CD4-positive, alpha-beta memory T cell (primary cell): ENCODE measurements at regions of chr3 and their contacts with region 1.

Region 1: GRCh38 chr3:169764452-169765274 is at the start of gene TERC:
- DNase-seq: peak; percentile 93 to 96 (median 95)
- H3K4me3 ChIP-seq: peak within 1 kb of the TSS; percentile 36 to 70
- H3K4me3 Mint-ChIP-seq: peak within 1 kb of the TSS; percentile 94 to 98 (median 98)
- H3K27ac ChIP-seq: peak within 1 kb of the TSS; percentile 87
- H3K27ac Mint-ChIP-seq: peak within 1 kb of the TSS; percentile 95 to 99 (median 98)
- H3K4me1 ChIP-seq: peaks cover 23% of the 10 kb centered on the region
- H3K4me1 Mint-ChIP-seq: peaks cover 15 to 43% (median 23%) of the 10 kb centered on the region in 4 donors
- H3K27me3 ChIP-seq: no peaks in the 10 kb centered on the region
- H3K27me3 Mint-ChIP-seq: no peaks in the 10 kb centered on the region
- total RNA-seq, gene TERC: 15.6 to 15.7 TPM

Region 2: GRCh38 chr3:169133178-169134161 is 631.2 kb before region 1 on chr3:
- CTCF ChIA-PET with region 1: no interaction called
- POLR2A ChIA-PET with region 1: no interaction called
- intact Hi-C with region 1: no loop called
- DNase-seq: no peak
- H3K4me3 ChIP-seq: no peak overlapping the region
- H3K4me3 Mint-ChIP-seq: no peak overlapping the region
- H3K27ac ChIP-seq: no peak overlapping the region
- H3K27ac Mint-ChIP-seq: no peak overlapping the region
- H3K4me1 ChIP-seq: no peaks in the 10 kb centered on the region
- H3K4me1 Mint-ChIP-seq: no peaks in the 10 kb centered on the region
- H3K27me3 ChIP-seq: no peaks in the 10 kb centered on the region
- H3K27me3 Mint-ChIP-seq: peaks cover 2 to 6% of the 10 kb centered on the region in 2 donors

Region 3: DNA sequence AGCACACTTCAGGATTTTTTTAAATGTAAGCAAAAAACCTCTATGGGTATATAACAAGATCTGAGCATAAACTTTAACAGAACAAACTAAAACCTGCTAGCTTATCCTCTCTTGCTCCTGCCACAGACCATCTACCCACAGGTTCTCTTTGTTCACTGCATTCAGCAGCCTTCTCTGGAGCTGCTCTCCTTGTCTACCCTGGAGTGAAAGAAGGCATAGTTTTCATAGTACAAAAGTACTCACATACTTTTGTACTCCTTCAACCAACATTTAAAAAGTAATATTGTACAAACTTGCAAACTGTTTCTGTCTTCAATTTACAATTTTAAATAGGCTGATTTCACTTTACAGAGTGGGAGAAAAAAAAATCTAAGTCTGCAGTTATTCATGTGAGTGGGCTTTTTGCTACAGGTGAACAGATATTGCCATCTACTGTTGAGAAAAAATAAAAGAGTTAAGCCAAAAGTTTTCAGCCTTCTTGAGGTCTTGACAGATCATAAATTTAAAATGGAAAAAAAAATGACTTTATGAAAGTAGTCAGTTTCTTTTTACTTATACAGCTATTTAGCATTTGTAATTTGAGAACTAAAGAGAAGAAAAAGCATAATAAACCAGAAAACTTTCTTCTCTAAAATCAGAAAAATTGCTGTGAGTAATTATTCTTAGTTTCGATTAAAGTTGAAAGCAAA is 20.2 kb before region 1 on chr3:
- CTCF ChIA-PET with region 1: no interaction called
- POLR2A ChIA-PET with region 1: no interaction called
- intact Hi-C with region 1: no loop called
- DNase-seq: no peak
- H3K4me3 ChIP-seq: no peak overlapping the region
- H3K4me3 Mint-ChIP-seq: no peak overlapping the region
- H3K27ac ChIP-seq: no peak overlapping the region
- H3K27ac Mint-ChIP-seq: no peak overlapping the region
- H3K4me1 ChIP-seq: no peaks in the 10 kb centered on the region
- H3K4me1 Mint-ChIP-seq: peaks cover 0 to 4% (median 0%) of the 10 kb centered on the region in 4 donors
- H3K27me3 ChIP-seq: no peaks in the 10 kb centered on the region
- H3K27me3 Mint-ChIP-seq: peaks cover 23 to 29% of the 10 kb centered on the region in 2 donors

Region 4: GRCh38 chr3:169812332-169813235 is 47.9 kb after region 1 on chr3 and contains the starts of genes LRRC34 and LRRIQ4:
- CTCF ChIA-PET with region 1: interaction called, 8 read pairs
- POLR2A ChIA-PET with region 1: interaction called, 5 read pairs
- intact Hi-C with region 1: loop called (anchors 1 kb)
- DNase-seq: peak; percentile 45 to 68 (median 55)
- H3K4me3 ChIP-seq: peak within 1 kb of the TSS; percentile 65 to 80
- H3K4me3 Mint-ChIP-seq: peak within 1 kb of the TSS; percentile 79 to 98 (median 86)
- H3K27ac ChIP-seq: peak within 1 kb of the TSS; percentile 40
- H3K27ac Mint-ChIP-seq: peak within 1 kb of the TSS; percentile 55 to 87 (median 65)
- H3K4me1 ChIP-seq: peaks cover 21% of the 10 kb centered on the region
- H3K4me1 Mint-ChIP-seq: peaks cover 17 to 29% (median 19%) of the 10 kb centered on the region in 4 donors
- H3K27me3 ChIP-seq: no peaks in the 10 kb centered on the region
- H3K27me3 Mint-ChIP-seq: peaks cover 0 to under 1% of the 10 kb centered on the region in 2 donors
- total RNA-seq, gene LRRC34: 0.33 to 0.47 TPM
- total RNA-seq, gene LRRIQ4: not detected

Region 5: DNA sequence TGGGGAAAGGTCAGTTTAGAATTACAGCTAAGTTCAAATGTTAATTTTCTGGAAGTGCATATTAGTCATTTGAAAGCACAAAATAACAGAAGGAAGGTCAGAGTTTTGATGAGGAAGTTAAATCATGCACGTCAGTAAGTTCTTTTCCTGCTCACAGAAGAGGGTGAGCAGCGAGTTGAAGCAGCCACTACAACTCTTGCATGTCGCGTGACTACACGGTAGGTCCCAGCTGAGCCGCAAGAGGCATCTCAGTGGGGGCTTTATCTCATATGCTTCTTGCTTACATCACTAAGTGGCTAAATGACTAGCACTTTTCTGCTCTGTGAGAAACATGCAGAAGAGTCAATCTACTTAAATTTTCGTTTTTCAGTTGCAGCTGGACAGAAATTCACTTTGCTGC is 180.7 kb after region 1 on chr3:
- CTCF ChIA-PET with region 1: no interaction called
- POLR2A ChIA-PET with region 1: no interaction called
- intact Hi-C with region 1: no loop called
- DNase-seq: no peak
- H3K4me3 ChIP-seq: no peak overlapping the region
- H3K4me3 Mint-ChIP-seq: peak overlapping the region in 1 of 8 donors; percentile 22
- H3K27ac ChIP-seq: no peak overlapping the region
- H3K27ac Mint-ChIP-seq: peak overlapping the region in 1 of 7 donors; percentile 17
- H3K4me1 ChIP-seq: peaks cover 1% of the 10 kb centered on the region
- H3K4me1 Mint-ChIP-seq: peaks cover 4 to 13% (median 5%) of the 10 kb centered on the region in 4 donors
- H3K27me3 ChIP-seq: no peaks in the 10 kb centered on the region
- H3K27me3 Mint-ChIP-seq: peaks cover 8% of the 10 kb centered on the region in 2 donors

Region 6: DNA sequence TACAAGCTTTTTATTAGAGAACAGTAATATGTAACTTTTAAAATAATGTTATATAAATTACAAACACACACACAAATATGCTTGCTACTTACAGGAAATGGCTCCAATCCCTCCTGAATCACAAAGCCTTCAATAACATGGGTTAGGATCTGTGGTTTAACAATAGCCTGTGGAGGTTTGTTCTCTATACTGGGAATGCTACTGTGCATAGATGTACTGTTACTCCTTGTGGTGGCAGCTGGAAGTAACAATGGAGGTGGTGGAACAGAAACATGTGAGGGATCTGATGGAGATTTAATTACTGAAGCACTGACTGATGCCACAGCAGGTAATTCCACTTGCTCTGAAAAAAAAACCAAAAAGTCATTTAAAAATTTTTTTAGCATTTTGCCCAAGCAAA is 352.5 kb after region 1 on chr3:
- CTCF ChIA-PET with region 1: no interaction called
- POLR2A ChIA-PET with region 1: no interaction called
- intact Hi-C with region 1: loop called (anchors 10 kb)
- DNase-seq: no peak
- H3K4me3 ChIP-seq: no peak overlapping the region
- H3K4me3 Mint-ChIP-seq: no peak overlapping the region
- H3K27ac ChIP-seq: no peak overlapping the region
- H3K27ac Mint-ChIP-seq: peak overlapping the region in 1 of 7 donors; percentile 85
- H3K4me1 ChIP-seq: no peaks in the 10 kb centered on the region
- H3K4me1 Mint-ChIP-seq: peaks cover 0 to 6% (median 3%) of the 10 kb centered on the region in 4 donors
- H3K27me3 ChIP-seq: no peaks in the 10 kb centered on the region
- H3K27me3 Mint-ChIP-seq: no peaks in the 10 kb centered on the region

Region 7: DNA sequence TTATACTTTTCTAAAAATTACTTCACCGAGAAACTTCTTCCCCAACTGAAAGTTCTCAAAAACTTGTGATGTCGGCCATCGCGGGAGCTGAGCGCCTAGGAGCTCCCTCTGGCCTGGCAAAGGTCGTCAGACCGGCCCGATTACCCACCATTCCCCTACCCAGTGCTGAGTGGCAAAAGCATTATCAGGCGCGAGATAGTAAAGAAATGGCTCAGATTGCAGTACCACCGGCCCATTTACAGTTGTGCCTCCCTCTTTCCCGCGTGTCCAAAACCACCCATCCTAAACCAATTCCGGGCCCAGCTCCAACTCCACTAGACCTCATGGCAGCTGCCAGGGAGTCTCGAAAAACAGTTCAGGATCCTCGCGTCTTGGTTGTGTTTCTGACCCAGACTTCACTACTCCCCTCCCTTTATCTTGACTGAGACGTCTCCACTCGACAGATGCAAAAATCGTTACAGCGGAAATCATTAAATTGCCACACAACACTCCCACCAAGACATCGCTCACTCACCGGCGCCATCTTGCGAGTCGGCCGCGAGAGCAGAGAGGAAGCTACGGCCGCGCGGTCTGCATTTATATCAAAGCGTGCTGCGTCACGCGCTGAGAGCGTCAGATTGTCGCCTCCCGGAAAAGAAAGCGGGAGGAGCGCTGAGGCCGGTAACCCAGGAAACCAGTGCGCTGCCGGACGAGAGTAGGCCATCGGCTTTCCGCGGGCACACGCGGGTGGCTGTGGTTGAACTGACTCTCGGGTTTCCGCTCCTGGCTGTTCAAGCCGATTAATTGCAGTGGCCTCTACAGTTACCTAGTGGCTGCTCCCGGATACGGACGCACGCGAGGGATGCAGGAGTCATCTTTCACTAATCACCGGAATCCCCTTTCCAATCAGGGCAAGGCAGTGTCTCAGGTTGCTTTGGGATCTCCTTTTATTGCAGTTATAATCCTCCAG is 1105.3 kb after region 1 on chr3 and contains the start of gene RPL22L1:
- CTCF ChIA-PET with region 1: no interaction called
- POLR2A ChIA-PET with region 1: interaction called, 9 read pairs
- intact Hi-C with region 1: loop called (anchors 1 kb)
- DNase-seq: peak; percentile 92 to 94 (median 94)
- H3K4me3 ChIP-seq: peak within 1 kb of the TSS; percentile 76 to 92
- H3K4me3 Mint-ChIP-seq: peak within 1 kb of the TSS; percentile 91 to 98 (median 96)
- H3K27ac ChIP-seq: peak within 1 kb of the TSS; percentile 82
- H3K27ac Mint-ChIP-seq: peak within 1 kb of the TSS; percentile 92 to 99 (median 98)
- H3K4me1 ChIP-seq: peaks cover 34% of the 10 kb centered on the region
- H3K4me1 Mint-ChIP-seq: peaks cover 12 to 36% (median 24%) of the 10 kb centered on the region in 4 donors
- H3K27me3 ChIP-seq: no peaks in the 10 kb centered on the region
- H3K27me3 Mint-ChIP-seq: no peaks in the 10 kb centered on the region
- total RNA-seq, gene RPL22L1: 31.9 to 32.3 TPM